ENCODE measurements at regions of chr11 and their contacts with region 1.

Region 1: GRCh38 chr11:61332797-61333549 is at the starts of genes DDB1 and TKFC:
- DNase-seq: peak; percentile 94
- H3K4me3 Mint-ChIP-seq: peak within 1 kb of the TSS; percentile 93
- H3K27ac Mint-ChIP-seq: peak within 1 kb of the TSS; percentile 98
- H3K4me1 Mint-ChIP-seq: peaks cover 41% of the 10 kb centered on the region
- H3K27me3 Mint-ChIP-seq: no peaks in the 10 kb centered on the region
- CTCF ChIP-seq: no peak
- total RNA-seq, gene DDB1: 172 and 188 TPM in 2 replicates
- total RNA-seq, gene TKFC: 79.7 and 93.7 TPM in 2 replicates

Region 2: GRCh38 chr11:61004180-61004611 is 328.8 kb before region 1 on chr11:
- CTCF ChIA-PET with region 1: no interaction called
- POLR2A ChIA-PET with region 1: no interaction called
- intact Hi-C with region 1: no loop called
- DNase-seq: no peak
- H3K4me3 Mint-ChIP-seq: no peak overlapping the region
- H3K27ac Mint-ChIP-seq: no peak overlapping the region
- H3K4me1 Mint-ChIP-seq: no peaks in the 10 kb centered on the region
- H3K27me3 Mint-ChIP-seq: peaks cover 11% of the 10 kb centered on the region
- CTCF ChIP-seq: no peak

Region 3: DNA sequence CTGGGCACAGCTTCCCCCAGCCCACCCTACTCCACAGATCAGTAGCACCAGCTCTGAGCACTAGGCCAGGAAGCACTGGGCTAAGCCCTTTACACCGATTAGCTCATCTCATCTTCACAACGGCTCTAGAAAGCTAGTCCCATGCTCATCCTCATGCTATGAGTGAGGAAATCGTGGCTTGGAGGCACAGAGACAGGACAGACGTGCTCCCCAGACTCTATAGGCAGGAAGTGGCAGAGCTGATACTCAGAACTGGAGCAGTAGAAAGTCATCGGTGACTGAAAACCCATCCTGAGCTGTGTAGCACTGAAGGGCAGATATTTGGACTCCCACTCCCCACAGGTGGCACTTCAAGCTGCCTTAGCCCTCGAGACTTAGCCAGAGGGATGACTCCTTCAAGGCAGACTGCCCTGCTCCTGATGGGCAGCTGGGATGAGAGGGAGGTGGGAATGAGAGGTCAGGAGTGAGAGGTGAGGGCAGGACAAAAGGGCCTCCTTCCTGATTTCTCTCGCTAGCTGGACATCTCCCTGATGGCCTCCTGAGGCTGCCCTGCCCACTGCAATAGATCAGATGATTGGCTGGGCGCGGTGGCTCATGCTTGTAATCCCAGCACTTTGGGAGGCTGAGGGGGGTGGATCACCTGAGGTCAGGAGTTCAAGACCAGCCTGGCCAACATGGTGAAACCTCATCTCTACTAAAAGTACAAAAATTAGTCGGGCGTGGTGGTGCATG is 221.0 kb before region 1 on chr11:
- CTCF ChIA-PET with region 1: no interaction called
- POLR2A ChIA-PET with region 1: no interaction called
- intact Hi-C with region 1: no loop called
- DNase-seq: no peak
- H3K4me3 Mint-ChIP-seq: no peak overlapping the region
- H3K27ac Mint-ChIP-seq: no peak overlapping the region
- H3K4me1 Mint-ChIP-seq: no peaks in the 10 kb centered on the region
- H3K27me3 Mint-ChIP-seq: no peaks in the 10 kb centered on the region
- CTCF ChIP-seq: no peak

Region 4: DNA sequence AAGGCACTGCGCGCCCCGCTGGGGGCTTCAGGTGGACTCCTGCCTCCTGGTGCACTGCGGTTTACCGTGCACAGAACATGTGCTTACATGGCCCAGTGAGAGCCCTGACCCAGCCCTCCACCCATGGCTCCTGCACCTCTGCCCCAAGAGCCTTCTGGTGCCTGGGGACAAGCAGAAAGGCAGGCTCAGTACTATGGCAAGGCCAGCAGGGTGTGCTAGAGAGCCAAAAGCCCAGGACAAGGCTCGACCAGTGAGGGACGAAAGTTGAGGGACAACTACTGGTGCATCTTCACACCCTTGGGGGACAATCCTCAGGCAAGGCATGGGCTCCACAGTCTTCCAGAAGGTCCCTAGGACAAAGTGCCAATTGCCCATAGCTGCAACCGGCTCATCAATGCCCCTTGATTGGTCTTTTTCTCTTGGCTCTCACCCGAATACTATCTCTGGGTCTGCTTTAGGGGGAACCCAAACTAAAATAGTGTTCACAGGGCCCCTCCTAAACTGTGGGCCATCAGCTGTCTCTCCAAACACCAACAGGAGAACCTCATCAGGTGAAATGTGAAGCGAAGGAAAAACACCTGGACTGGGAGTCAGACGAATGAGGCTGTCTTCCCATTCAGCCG is 78.5 kb before region 1 on chr11:
- CTCF ChIA-PET with region 1: interaction called, 14 read pairs
- POLR2A ChIA-PET with region 1: interaction called, 3 read pairs
- intact Hi-C with region 1: loop called (anchors 10 kb)
- DNase-seq: peak; percentile 71
- H3K4me3 Mint-ChIP-seq: no peak overlapping the region
- H3K27ac Mint-ChIP-seq: no peak overlapping the region
- H3K4me1 Mint-ChIP-seq: no peaks in the 10 kb centered on the region
- H3K27me3 Mint-ChIP-seq: peaks cover 34% of the 10 kb centered on the region
- CTCF ChIP-seq: peak; percentile 89

Region 5: GRCh38 chr11:61347916-61348461 is 15.0 kb after region 1 on chr11:
- CTCF ChIA-PET with region 1: interaction called, 154 read pairs
- POLR2A ChIA-PET with region 1: interaction called, 9 read pairs
- intact Hi-C with region 1: no loop called
- DNase-seq: no peak
- H3K4me3 Mint-ChIP-seq: no peak overlapping the region
- H3K27ac Mint-ChIP-seq: no peak overlapping the region
- H3K4me1 Mint-ChIP-seq: no peaks in the 10 kb centered on the region
- H3K27me3 Mint-ChIP-seq: no peaks in the 10 kb centered on the region
- CTCF ChIP-seq: no peak

Region 6: GRCh38 chr11:61369372-61370219 is 36.6 kb after region 1 on chr11:
- CTCF ChIA-PET with region 1: interaction called, 80 read pairs
- POLR2A ChIA-PET with region 1: interaction called, 27 read pairs
- intact Hi-C with region 1: no loop called
- DNase-seq: peak; percentile 96
- H3K4me3 Mint-ChIP-seq: peak overlapping the region; percentile 41
- H3K27ac Mint-ChIP-seq: peak overlapping the region; percentile 99
- H3K4me1 Mint-ChIP-seq: peaks cover 22% of the 10 kb centered on the region
- H3K27me3 Mint-ChIP-seq: no peaks in the 10 kb centered on the region
- CTCF ChIP-seq: no peak

Region 7: DNA sequence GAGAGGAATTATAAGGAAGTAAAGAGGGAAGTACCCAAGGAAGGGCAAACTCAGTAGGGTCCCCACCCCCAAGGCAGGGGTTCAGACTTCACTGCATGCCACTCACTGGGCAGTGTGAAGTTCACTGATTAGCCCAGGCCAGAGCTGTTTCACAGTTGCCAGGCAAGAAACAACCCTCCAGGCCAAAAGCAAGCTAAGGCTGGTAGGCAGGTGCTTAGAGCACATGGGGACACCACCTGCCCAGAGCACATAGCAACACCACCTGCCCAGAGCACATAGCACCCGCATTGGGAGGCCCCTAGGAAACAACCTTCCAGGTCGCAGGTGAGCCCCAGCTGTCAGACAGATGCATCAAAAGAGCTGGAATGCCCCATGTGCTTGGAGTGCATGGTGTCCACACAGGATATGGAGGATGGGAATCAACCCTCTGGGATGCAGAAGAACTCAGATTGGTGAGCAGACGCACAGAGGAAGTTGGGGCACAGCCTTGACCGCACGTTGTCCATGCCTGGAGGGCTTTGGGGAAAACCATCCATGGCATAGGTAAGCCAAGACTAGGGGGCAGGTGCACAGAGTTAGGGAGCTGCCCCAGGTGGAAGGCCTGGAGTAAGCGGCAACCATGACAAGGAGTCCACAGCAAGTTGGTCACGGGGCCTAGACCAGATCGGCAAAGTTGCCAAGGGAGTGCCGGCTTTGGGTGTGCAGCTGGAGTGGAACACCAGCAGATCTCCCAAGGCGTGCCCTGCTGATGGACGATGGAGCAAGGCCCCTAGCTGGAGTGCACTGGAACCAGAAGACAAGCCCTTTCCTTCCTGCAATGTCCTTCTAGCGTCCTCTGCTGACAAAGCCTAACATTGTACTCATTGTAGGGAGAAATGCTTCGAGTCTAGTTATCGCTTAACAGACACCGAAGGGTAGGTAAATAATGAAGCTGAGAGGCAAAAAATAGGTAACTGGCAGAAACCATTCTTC is 51.6 kb after region 1 on chr11:
- CTCF ChIA-PET with region 1: interaction called, 439 read pairs
- POLR2A ChIA-PET with region 1: interaction called, 220 read pairs
- intact Hi-C with region 1: loop called (anchors 1 kb)
- DNase-seq: peak; percentile 61
- H3K4me3 Mint-ChIP-seq: no peak overlapping the region
- H3K27ac Mint-ChIP-seq: no peak overlapping the region
- H3K4me1 Mint-ChIP-seq: peaks cover 11% of the 10 kb centered on the region
- H3K27me3 Mint-ChIP-seq: no peaks in the 10 kb centered on the region
- CTCF ChIP-seq: peak; percentile 25

Region 8: GRCh38 chr11:61403658-61404057 is 70.7 kb after region 1 on chr11:
- CTCF ChIA-PET with region 1: interaction called, 20 read pairs
- POLR2A ChIA-PET with region 1: no interaction called
- intact Hi-C with region 1: no loop called
- DNase-seq: no peak
- H3K4me3 Mint-ChIP-seq: no peak overlapping the region
- H3K27ac Mint-ChIP-seq: no peak overlapping the region
- H3K4me1 Mint-ChIP-seq: no peaks in the 10 kb centered on the region
- H3K27me3 Mint-ChIP-seq: no peaks in the 10 kb centered on the region
- CTCF ChIP-seq: no peak

Region 9: DNA sequence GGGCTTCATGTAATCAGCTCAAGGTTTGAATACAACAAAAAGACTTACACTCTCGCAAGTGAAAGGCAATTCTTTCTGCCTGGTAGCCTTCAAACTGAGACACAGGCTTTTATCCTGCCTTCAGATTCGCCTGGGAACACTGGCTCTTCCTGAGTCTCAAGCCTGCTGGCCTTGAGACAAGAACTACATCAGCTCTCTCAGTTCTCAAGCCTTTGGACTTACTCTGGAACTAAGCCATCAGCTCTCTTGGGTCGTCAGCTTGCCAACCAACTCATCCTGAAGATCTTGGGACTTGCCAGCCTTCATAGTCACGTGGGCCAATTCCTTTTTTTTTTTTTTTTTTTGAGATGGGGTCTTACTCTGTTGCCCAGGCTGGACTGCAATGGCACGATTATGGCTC is 139.9 kb after region 1 on chr11:
- CTCF ChIA-PET with region 1: no interaction called
- POLR2A ChIA-PET with region 1: no interaction called
- intact Hi-C with region 1: no loop called
- DNase-seq: no peak
- H3K4me3 Mint-ChIP-seq: no peak overlapping the region
- H3K27ac Mint-ChIP-seq: no peak overlapping the region
- H3K4me1 Mint-ChIP-seq: peaks cover 9% of the 10 kb centered on the region
- H3K27me3 Mint-ChIP-seq: no peaks in the 10 kb centered on the region
- CTCF ChIP-seq: no peak